CD14-positive monocyte (primary cell): ENCODE measurements at regions of chr2 and their contacts with region 1.

Region 1: DNA sequence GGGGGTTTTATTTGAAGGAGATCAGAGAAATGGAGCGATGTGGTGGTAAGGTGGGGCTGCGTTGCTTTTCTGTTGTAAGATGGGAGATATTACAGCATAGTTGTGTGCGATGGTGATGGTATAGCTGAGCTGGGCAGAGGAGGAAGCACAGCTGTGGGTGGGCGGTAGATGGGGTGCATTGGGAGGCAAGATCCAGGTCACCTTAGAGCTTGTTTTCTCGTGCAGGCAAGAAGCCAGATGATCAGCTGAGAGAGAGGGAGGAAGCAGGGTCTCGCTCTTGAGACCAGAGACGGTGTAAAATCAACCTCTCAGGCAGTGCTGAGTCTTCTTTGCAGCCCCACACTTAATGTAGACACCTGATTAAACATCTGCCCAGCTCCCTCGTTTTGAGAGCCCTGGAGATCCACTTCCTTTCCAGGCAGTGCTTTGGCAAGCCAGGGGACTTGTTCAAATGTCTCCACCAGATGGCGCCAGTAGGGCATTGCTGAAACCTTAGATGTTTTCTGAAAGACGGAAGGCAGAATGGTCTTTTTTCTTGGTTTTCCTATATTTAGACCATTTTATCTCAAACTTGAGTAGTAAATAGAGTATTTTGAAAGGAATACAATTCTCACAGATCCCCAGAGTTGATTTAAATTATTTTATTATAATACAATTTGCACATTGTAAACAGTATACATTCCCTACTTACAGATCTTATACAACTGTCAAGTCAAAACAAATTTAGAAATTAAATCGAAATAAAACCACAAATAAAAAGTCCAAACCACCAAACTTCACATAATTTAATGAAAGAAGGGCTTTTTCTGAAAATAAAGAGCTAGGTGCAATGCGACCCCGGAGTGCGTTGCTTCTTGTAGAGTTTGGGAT is 21.1 kb upstream of the LYPD6B start:
- DNase-seq: peak; percentile 61 to 73 (median 72)
- H3K4me3 ChIP-seq: no peak overlapping the region
- H3K4me3 Mint-ChIP-seq: no peak overlapping the region
- H3K27ac ChIP-seq: no peak overlapping the region
- H3K27ac Mint-ChIP-seq: no peak overlapping the region
- H3K4me1 ChIP-seq: peaks cover 36 to 39% of the 10 kb centered on the region in 2 donors
- H3K4me1 Mint-ChIP-seq: peaks cover 43% of the 10 kb centered on the region
- H3K27me3 ChIP-seq: no peaks in the 10 kb centered on the region
- H3K27me3 Mint-ChIP-seq: peaks cover 0 to 5% (median 3%) of the 10 kb centered on the region in 3 donors
- CTCF ChIP-seq: peak; percentile 80

Region 2: GRCh38 chr2:149313512-149313972 is 296.2 kb after region 1 on chr2:
- intact Hi-C with region 1: loop called (anchors 5 kb)
- DNase-seq: peak in 2 of 3 donors; percentile 17 to 30
- H3K4me3 ChIP-seq: no peak overlapping the region
- H3K4me3 Mint-ChIP-seq: no peak overlapping the region
- H3K27ac ChIP-seq: no peak overlapping the region
- H3K27ac Mint-ChIP-seq: no peak overlapping the region
- H3K4me1 ChIP-seq: no peaks in the 10 kb centered on the region
- H3K4me1 Mint-ChIP-seq: peaks cover 4% of the 10 kb centered on the region
- H3K27me3 ChIP-seq: peaks cover 0 to 9% of the 10 kb centered on the region in 2 donors
- H3K27me3 Mint-ChIP-seq: peaks cover 9 to 29% (median 9%) of the 10 kb centered on the region in 3 donors
- CTCF ChIP-seq: peak; percentile 85